ENCODE measurements at regions of chr2 and their contacts with region 1.

Region 1: GRCh38 chr2:113138428-113139322 is 11.3 kb downstream of the IL1RN start:
- DNase-seq: peak; percentile 82
- ATAC-seq: peak; percentile 83
- H3K4me3 Mint-ChIP-seq: peak overlapping the region; percentile 47
- H3K27ac Mint-ChIP-seq: peak overlapping the region; percentile 76
- H3K4me1 Mint-ChIP-seq: peaks cover 34% of the 10 kb centered on the region
- H3K27me3 Mint-ChIP-seq: peaks cover 3% of the 10 kb centered on the region

Region 2: DNA sequence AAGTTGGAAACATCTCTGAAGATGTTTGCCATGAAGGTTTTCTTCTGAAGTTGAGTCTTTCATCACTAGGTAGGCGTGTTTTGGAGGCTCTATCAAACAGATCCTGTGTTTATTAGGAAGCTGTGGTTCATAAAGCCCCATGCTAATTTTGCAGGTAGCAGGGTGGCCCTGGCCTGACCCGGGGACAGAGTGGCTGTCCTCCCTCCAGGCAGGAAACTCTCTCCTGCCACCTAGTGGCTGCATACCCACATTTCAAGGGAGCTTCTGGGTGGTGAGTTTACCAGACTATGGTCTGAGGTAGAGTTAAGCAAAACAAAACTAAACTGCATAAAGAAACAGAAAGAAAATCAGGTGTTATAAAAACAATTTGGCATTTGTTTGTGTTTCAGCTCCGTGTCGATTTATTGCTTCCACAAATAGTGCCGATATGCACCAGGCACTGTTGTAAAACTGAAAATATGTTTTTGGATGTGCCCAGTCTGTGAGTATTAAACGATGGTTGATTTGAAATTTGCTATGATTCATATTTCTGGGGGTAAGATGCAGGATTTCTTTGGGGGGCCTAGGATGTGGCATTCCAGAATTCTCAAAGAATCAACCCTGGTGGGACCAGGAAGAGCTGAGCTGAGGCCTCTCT is 253.7 kb before region 1 on chr2:
- CTCF ChIA-PET with region 1: no interaction called
- POLR2A ChIA-PET with region 1: no interaction called
- DNase-seq: peak; percentile 74
- ATAC-seq: peak; percentile 77
- H3K4me3 Mint-ChIP-seq: no peak overlapping the region
- H3K27ac Mint-ChIP-seq: no peak overlapping the region
- H3K4me1 Mint-ChIP-seq: peaks cover 27% of the 10 kb centered on the region
- H3K27me3 Mint-ChIP-seq: peaks cover 9% of the 10 kb centered on the region

Region 3: GRCh38 chr2:113080134-113080533 is 58.5 kb before region 1 on chr2:
- CTCF ChIA-PET with region 1: interaction called, 215 read pairs
- POLR2A ChIA-PET with region 1: no interaction called
- DNase-seq: peak; percentile 61
- ATAC-seq: peak; percentile 42
- H3K4me3 Mint-ChIP-seq: no peak overlapping the region
- H3K27ac Mint-ChIP-seq: no peak overlapping the region
- H3K4me1 Mint-ChIP-seq: peaks cover 19% of the 10 kb centered on the region
- H3K27me3 Mint-ChIP-seq: peaks cover 8% of the 10 kb centered on the region

Region 4: DNA sequence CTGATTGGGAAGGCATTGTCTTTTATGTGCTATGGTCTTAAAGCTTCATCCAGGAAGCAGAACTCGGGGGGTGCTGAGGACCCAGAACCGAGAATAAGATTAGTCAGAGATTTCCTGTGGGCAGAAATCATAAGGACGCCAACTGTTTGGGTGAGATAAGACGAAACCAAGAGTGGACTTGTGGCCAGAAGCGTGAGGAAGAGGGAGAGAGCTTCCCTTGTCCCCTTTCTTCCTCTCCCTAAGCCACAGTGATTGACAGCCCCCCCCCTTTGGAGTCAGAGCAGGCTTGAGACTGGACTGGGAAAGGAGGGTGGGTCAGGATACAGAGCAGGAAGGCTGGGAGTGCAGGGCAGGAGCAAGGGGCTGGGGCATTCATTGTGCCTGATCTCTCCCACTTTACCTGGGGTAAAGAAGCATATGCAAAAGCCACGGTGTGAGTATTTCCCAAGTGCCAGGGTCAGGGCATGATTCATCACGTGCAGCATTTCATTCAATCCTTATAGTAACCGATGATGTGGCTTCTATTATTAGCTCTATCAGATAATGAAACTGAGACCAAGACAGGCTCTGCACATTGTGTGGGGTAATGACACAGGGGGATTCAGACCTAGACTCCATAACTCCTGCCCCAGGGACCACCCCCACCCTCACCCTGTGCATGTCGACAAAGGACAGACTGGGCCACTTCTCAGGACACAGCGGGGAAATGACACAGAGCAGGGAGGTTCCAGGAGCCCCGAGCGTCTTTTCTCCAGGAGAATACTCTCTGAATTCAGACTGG is 14.3 kb before region 1 on chr2:
- CTCF ChIA-PET with region 1: interaction called, 42 read pairs
- POLR2A ChIA-PET with region 1: interaction called, 3 read pairs
- DNase-seq: no peak
- ATAC-seq: no peak
- H3K4me3 Mint-ChIP-seq: peak overlapping the region; percentile 0
- H3K27ac Mint-ChIP-seq: no peak overlapping the region
- H3K4me1 Mint-ChIP-seq: peaks cover 25% of the 10 kb centered on the region
- H3K27me3 Mint-ChIP-seq: peaks cover 16% of the 10 kb centered on the region

Region 5: GRCh38 chr2:113167115-113167932 is 28.6 kb after region 1 on chr2:
- CTCF ChIA-PET with region 1: interaction called, 370 read pairs
- POLR2A ChIA-PET with region 1: interaction called, 3 read pairs
- DNase-seq: peak; percentile 61
- ATAC-seq: peak; percentile 76
- H3K4me3 Mint-ChIP-seq: peak overlapping the region; percentile 53
- H3K27ac Mint-ChIP-seq: peak overlapping the region; percentile 91
- H3K4me1 Mint-ChIP-seq: peaks cover 70% of the 10 kb centered on the region
- H3K27me3 Mint-ChIP-seq: no peaks in the 10 kb centered on the region

Region 6: GRCh38 chr2:113227287-113227686 is 88.6 kb after region 1 on chr2:
- CTCF ChIA-PET with region 1: interaction called, 11 read pairs
- POLR2A ChIA-PET with region 1: no interaction called
- DNase-seq: no peak
- ATAC-seq: peak; percentile 14
- H3K4me3 Mint-ChIP-seq: no peak overlapping the region
- H3K27ac Mint-ChIP-seq: no peak overlapping the region
- H3K4me1 Mint-ChIP-seq: peaks cover 41% of the 10 kb centered on the region
- H3K27me3 Mint-ChIP-seq: peaks cover 4% of the 10 kb centered on the region

Region 7: GRCh38 chr2:113390124-113390849 is 251.6 kb after region 1 on chr2:
- CTCF ChIA-PET with region 1: interaction called, 19 read pairs
- POLR2A ChIA-PET with region 1: no interaction called
- DNase-seq: peak; percentile 73
- ATAC-seq: peak; percentile 90
- H3K4me3 Mint-ChIP-seq: peak overlapping the region; percentile 74
- H3K27ac Mint-ChIP-seq: peak overlapping the region; percentile 82
- H3K4me1 Mint-ChIP-seq: peaks cover 15% of the 10 kb centered on the region
- H3K27me3 Mint-ChIP-seq: peaks cover 20% of the 10 kb centered on the region